Panc1 (cell line): ENCODE measurements at regions of chr9 and their contacts with region 1.

Region 1: GRCh38 chr9:124532897-124533296 is 25.7 kb upstream of the NR5A1 start:
- DNase-seq: no peak
- ATAC-seq: no peak
- H3K4me3 ChIP-seq: no peak overlapping the region
- H3K27ac ChIP-seq: no peak overlapping the region
- H3K4me1 ChIP-seq: no peaks in the 10 kb centered on the region
- H3K27me3 ChIP-seq: no peaks in the 10 kb centered on the region
- CTCF ChIP-seq: no peak; the same call in 1 of the 2 replicates

Region 2: GRCh38 chr9:124522121-124523098 is 10.5 kb before region 1 on chr9:
- CTCF ChIA-PET with region 1: interaction called, 10 read pairs
- POLR2A ChIA-PET with region 1: no interaction called
- in situ Hi-C with region 1: no loop called
- intact Hi-C with region 1: no loop called
- DNase-seq: no peak
- ATAC-seq: no peak
- H3K4me3 ChIP-seq: no peak overlapping the region
- H3K27ac ChIP-seq: no peak overlapping the region
- H3K4me1 ChIP-seq: no peaks in the 10 kb centered on the region
- H3K27me3 ChIP-seq: no peaks in the 10 kb centered on the region
- CTCF ChIP-seq: no peak

Region 3: DNA sequence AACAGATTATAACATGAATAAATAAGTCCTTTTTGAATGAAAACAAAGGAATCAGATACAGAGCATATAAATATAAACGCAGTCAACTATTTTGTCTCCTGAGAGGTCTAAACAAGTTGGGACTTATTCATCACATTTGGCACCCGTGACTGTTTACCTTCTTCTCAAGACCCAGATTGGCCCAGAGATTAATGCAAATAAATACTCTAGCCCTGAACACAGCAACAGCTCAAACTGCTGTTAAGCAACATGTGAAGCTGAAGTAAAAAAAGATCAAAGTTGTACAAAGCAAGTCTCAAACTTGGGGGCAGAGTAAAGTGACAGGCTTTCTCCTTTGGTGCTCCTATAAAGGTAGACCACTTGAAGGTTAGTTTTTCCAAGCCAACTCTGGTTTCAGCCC is 69.3 kb after region 1 on chr9:
- CTCF ChIA-PET with region 1: no interaction called
- POLR2A ChIA-PET with region 1: no interaction called
- in situ Hi-C with region 1: no loop called
- intact Hi-C with region 1: no loop called
- DNase-seq: no peak
- ATAC-seq: no peak
- H3K4me3 ChIP-seq: no peak overlapping the region
- H3K27ac ChIP-seq: no peak overlapping the region
- H3K4me1 ChIP-seq: no peaks in the 10 kb centered on the region
- H3K27me3 ChIP-seq: no peaks in the 10 kb centered on the region
- CTCF ChIP-seq: no peak

Region 4: GRCh38 chr9:125038166-125038565 is 505.3 kb after region 1 on chr9:
- CTCF ChIA-PET with region 1: no interaction called
- POLR2A ChIA-PET with region 1: no interaction called
- in situ Hi-C with region 1: no loop called
- intact Hi-C with region 1: no loop called
- DNase-seq: no peak
- ATAC-seq: no peak
- H3K4me3 ChIP-seq: no peak overlapping the region
- H3K27ac ChIP-seq: no peak overlapping the region
- H3K4me1 ChIP-seq: no peaks in the 10 kb centered on the region
- H3K27me3 ChIP-seq: no peaks in the 10 kb centered on the region
- CTCF ChIP-seq: no peak